ENCODE measurements at regions of chr14 and their contacts with region 1.

Region 1: GRCh38 chr14:105398044-105398725 is at the start of gene TEX22:
- DNase-seq: peak; percentile 88 to 95
- H3K4me3 ChIP-seq: peak within 1 kb of the TSS; percentile 85
- H3K4me3 Mint-ChIP-seq: peak within 1 kb of the TSS; percentile 91
- H3K27ac Mint-ChIP-seq: peak within 1 kb of the TSS; percentile 81
- H3K4me1 ChIP-seq: peaks cover 6% of the 10 kb centered on the region; the same call in 1 of the 2 replicates
- H3K4me1 Mint-ChIP-seq: no peaks in the 10 kb centered on the region
- H3K27me3 ChIP-seq: no peaks in the 10 kb centered on the region
- H3K27me3 Mint-ChIP-seq: no peaks in the 10 kb centered on the region
- CTCF ChIP-seq: no peak
- total RNA-seq, gene TEX22: 0.86 and 0.91 TPM in 2 replicates

Region 2: DNA sequence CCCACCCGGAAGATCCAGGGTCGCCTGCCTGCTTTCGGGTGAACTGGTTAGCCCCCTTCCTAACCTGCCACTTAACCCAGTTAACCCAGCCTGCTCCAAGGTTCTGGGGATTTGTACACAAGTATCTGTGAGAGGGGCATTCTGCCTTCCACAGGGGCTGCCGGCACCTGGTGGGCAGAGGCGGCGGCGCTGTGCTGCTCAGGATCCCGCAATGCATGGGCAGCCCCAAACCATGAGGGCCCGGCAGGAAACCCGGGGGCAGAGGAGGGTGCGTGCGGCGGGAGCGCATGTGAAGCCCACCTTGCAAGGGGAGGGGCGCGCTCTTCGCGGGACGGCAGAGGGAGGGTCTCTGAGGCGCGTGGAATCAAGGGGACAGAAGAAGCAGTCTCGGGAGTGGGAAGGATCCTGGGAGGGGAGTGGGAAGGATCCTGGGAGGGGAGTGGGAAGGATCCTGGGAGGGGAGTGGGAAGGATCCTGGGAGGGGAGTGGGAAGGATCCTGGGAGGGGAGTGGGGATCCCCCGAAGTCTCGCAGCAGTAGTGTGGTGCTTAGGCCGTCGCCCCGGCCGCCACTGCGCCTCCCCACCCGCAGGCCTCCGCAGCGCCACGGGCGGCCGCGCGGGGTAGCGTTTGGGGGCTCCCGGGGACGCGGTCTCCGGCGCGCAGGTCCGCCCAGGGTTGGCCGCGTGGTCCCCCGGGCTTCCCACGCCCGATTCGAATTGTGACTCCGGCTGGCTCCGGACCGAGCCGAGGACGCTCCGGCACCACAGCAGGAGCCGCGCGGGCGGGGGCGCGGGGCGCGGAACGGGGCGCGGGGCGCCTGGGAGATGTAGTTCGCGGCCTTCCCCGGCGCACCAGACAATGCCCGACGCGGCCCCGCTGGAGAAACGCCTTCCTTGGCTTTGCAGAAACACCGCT is 16.5 kb after region 1 on chr14:
- CTCF ChIA-PET with region 1: no interaction called
- POLR2A ChIA-PET with region 1: interaction called, 4 read pairs
- intact Hi-C with region 1: loop called (anchors 1 kb)
- DNase-seq: peak; percentile 62 to 77
- H3K4me3 ChIP-seq: peak overlapping the region; percentile 39
- H3K4me3 Mint-ChIP-seq: peak overlapping the region; percentile 59
- H3K27ac Mint-ChIP-seq: no peak overlapping the region
- H3K4me1 ChIP-seq: peaks cover 22% of the 10 kb centered on the region
- H3K4me1 Mint-ChIP-seq: peaks cover 10% of the 10 kb centered on the region
- H3K27me3 ChIP-seq: no peaks in the 10 kb centered on the region
- H3K27me3 Mint-ChIP-seq: peaks cover 2% of the 10 kb centered on the region
- CTCF ChIP-seq: peak; percentile 49 to 65